Psoas muscle (tissue), 8 donors: ENCODE measurements at regions of chr18 and their contacts with region 1.

Region 1: DNA sequence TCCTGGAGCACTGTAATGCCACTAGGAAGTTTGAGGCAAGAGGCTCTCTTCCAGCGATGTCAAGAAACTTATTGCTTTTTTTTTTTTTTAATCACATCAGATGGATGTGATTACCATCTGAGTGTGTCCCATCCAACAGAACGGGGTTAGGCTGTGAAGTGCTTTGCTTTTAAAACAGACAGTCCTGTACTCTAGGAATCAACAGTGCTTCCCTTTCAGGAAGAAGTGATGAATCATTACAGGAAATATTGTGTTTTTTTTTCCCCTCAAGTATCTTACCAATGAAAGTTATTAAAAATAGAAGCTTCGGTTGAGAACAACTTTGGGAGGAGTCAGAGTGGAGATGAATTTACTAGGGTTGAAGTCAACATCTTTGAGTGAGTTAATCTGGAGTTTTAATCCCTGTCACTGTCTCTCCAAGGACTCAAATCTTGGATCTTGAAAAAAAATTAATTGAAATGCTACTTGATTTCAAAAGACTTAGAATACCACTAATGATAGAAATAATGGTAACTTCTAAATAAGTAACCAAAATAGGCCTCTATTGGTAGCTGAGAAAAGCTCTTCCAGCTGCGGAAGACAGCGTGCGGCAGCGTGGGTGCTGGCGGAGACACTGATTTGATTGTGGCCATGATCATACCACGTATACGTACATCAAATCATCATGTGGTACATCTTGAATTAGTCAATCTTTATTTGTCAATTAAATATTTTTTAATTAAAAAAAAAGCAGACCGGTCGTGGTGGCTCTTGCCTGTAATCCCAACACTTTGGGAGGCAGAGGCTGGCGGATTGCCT is 45.5 kb downstream of the GATA6 start:
- DNase-seq: no peak
- ATAC-seq: no peak
- H3K4me3 ChIP-seq: no peak overlapping the region
- H3K27ac ChIP-seq: no peak overlapping the region
- H3K4me1 ChIP-seq: no peaks in the 10 kb centered on the region
- H3K27me3 ChIP-seq: peaks cover 0 to 5% (median 0%) of the 10 kb centered on the region in 3 donors
- CTCF ChIP-seq: no peak

Region 2: DNA sequence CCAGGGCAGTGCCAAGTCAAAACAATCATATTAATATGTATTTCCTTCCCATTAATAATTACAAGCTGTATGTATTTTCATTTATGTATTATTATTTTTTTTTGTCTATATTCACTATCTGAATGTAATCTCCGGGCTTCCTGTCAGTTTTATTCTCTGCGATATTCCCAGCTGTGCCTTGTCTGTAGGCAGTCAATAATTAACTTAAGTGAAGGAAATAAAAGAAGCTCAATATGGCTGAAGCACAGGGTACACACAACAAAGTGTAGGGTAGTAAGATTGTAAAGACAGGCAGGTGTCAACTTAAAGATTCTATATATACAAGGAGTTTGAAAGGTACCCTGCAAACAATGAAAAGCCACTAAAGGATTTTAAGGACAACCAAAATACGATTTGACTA is 1226.2 kb before region 1 on chr18:
- intact Hi-C with region 1: loop called in 1 of 2 experiments (anchors 5 kb)
- DNase-seq: no peak
- ATAC-seq: no peak
- H3K4me3 ChIP-seq: no peak overlapping the region
- H3K27ac ChIP-seq: no peak overlapping the region
- H3K4me1 ChIP-seq: no peaks in the 10 kb centered on the region
- H3K27me3 ChIP-seq: no peaks in the 10 kb centered on the region
- CTCF ChIP-seq: no peak

Region 3: GRCh38 chr18:22152134-22152533 is 62.8 kb before region 1 on chr18:
- intact Hi-C with region 1: loop called in 1 of 2 experiments (anchors 10 kb)
- DNase-seq: no peak
- ATAC-seq: no peak
- H3K4me3 ChIP-seq: no peak overlapping the region
- H3K27ac ChIP-seq: no peak overlapping the region
- H3K4me1 ChIP-seq: no peaks in the 10 kb centered on the region
- H3K27me3 ChIP-seq: peaks cover 5 to 44% (median 9%) of the 10 kb centered on the region in 3 donors
- CTCF ChIP-seq: no peak

Region 4: DNA sequence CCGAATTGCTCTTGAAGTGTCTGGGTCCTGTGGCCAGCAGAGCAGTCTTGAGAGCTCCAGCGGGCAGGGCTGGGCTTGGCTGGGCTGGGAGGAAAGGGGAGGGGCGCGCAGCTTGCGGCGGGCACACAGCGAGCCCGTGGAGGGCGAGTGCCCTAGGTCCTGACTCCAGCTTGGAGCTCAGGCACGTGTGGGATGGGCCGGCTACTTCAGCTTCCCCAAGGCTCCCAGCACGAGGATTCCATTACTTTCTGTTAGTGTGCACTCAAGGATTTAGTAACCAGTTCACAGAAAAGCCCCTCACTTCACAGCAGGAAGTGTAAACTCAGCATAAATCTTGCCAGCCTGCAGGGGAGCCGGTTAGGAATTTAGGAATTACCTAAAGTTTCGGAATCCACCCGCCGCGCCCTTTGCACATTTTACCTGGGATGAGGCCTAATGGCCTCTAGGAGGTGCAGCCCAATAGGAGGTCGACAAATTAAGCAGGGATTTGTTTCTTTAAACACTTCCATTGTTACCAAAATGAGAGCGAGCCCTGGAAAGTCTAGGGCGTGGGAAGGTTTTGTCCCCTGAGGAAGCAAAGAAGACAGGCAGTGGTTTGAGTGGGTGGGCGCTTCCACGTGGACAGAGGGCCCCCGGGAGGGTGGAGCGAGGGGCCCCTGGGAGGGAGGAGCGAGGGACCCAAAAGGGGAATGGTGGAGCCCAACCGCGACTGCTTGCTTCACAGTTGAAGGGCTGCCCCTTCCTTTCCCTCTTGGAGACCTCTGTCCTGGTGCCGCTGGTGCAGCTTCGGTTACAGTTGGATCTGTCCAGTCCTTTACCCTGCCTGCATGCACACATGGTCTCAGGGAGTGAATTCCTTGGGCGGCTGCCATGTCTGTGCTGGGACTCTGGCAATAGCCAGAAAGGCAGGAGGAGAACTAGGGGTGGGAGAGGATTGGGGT is 109.5 kb after region 1 on chr18:
- intact Hi-C with region 1: no loop called
- DNase-seq: peak in 1 of 2 donors; percentile 62
- ATAC-seq: peak; percentile 30 to 78 (median 65)
- H3K4me3 ChIP-seq: peak overlapping the region; percentile 39
- H3K27ac ChIP-seq: no peak overlapping the region
- H3K4me1 ChIP-seq: peaks cover 3% of the 10 kb centered on the region
- H3K27me3 ChIP-seq: no peaks in the 10 kb centered on the region
- CTCF ChIP-seq: no peak